ENCODE measurements at regions of chr13 and their contacts with region 1.

Region 1: GRCh38 chr13:24491845-24492244 is 20.7 kb downstream of the PARP4 start:
- DNase-seq: no peak
- H3K4me3 ChIP-seq: no peak overlapping the region
- H3K27ac ChIP-seq: no peak overlapping the region
- H3K4me1 ChIP-seq: no peaks in the 10 kb centered on the region
- H3K27me3 ChIP-seq: no peaks in the 10 kb centered on the region
- CTCF ChIP-seq: no peak
- EP300 ChIP-seq: no peak
- POLR2A ChIP-seq: no peak

Region 2: DNA sequence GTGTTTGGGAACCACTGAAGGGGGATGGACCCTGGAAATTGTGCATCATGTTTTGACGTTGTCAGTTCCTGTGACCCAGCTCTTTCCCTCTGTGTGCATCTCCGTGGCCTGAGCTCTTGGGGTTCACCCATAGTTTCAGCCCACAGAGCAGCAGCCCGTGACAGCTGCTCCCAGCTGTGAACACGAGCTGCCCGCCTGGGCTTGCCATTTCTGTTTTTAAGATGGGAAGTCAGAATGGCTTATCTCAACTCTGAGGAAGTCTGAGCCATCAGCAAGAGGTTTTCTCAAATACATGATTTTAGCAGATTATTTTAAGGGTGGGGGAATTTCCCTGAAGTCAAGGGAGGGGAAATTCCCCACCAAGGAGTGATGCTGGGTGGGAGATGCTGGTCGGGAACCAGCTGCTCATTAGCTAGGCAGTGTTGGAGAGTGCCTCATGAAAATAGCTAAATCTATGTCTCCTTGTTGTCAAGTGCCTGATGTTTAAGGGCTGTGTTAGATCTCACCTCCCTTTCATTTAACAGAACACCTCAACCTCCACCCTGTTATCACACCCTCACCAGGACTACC is 217.3 kb before region 1 on chr13:
- in situ Hi-C with region 1: loop called in 1 of 4 experiments (anchors 25 kb)
- intact Hi-C with region 1: no loop called
- DNase-seq: peak; percentile 34
- H3K4me3 ChIP-seq: no peak overlapping the region
- H3K27ac ChIP-seq: peak overlapping the region; percentile 2 to 53 (median 30)
- H3K4me1 ChIP-seq: peaks cover 32 to 56% (median 33%) of the 10 kb centered on the region in 4 donors
- H3K27me3 ChIP-seq: no peaks in the 10 kb centered on the region
- CTCF ChIP-seq: no peak
- EP300 ChIP-seq: no peak
- POLR2A ChIP-seq: no peak

Region 3: DNA sequence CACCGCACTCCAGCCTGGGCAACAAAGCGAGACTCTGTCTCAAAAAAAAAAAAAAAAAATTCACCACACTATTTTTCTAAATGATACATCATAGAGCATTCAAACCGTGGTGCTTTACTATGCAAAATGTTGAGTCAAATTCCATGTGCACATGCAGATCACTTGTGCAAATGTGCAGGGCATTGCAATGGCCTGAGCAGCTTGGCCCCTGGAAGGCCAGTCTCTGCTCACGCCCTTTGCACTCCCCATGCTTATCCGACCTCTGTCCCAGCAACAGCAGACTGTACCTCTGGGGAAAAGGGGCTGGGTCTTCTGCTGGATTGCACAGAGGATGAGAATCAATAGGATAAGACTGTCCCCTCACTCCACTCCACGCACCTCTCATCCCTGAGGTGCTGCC is 37.8 kb before region 1 on chr13:
- in situ Hi-C with region 1: no loop called
- intact Hi-C with region 1: loop called (anchors 2 kb)
- DNase-seq: no peak
- H3K4me3 ChIP-seq: no peak overlapping the region
- H3K27ac ChIP-seq: no peak overlapping the region
- H3K4me1 ChIP-seq: no peaks in the 10 kb centered on the region
- H3K27me3 ChIP-seq: no peaks in the 10 kb centered on the region
- CTCF ChIP-seq: no peak
- EP300 ChIP-seq: no peak
- POLR2A ChIP-seq: no peak

Region 4: GRCh38 chr13:24557081-24557480 is 65.2 kb after region 1 on chr13:
- in situ Hi-C with region 1: no loop called
- intact Hi-C with region 1: loop called (anchors 2 kb)
- DNase-seq: no peak
- H3K4me3 ChIP-seq: no peak overlapping the region
- H3K27ac ChIP-seq: no peak overlapping the region
- H3K4me1 ChIP-seq: no peaks in the 10 kb centered on the region
- H3K27me3 ChIP-seq: peaks cover 24% of the 10 kb centered on the region
- CTCF ChIP-seq: no peak
- EP300 ChIP-seq: no peak
- POLR2A ChIP-seq: no peak

Measured in transverse colon (tissue), 4 donors.